ENCODE measurements at regions of chr5 and their contacts with region 1.

Region 1: DNA sequence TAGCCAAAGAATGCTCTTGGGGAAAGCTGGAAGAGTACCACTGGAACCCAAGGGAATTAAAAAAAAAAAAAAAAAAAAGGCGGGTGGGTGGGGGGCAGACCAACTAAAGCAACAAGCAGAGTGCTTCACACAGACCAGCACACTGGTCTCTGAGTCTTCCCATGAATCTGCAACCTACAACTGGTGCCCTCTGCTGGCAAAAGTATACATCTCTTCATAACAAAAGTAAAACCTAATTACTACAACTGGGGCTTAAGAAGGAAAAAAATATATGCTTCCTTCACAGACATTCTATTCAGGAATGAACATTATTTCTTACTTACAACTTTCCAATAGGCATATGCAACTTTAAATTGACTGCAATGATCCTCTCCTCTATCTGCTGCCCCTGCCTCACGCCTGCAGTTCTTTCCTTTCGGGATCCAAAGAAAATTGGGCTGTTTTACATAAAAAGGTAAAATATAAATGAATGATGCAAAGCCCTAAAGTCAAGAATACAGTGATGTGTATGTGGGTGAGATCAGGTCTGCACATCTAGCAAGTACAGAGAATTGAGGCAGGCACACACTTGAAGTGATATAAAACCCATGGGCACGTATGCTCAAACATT is 7.2 kb upstream of the KLHL3 start:
- DNase-seq: no peak
- H3K4me3 ChIP-seq: no peak overlapping the region
- H3K27ac ChIP-seq: no peak overlapping the region
- H3K4me1 ChIP-seq: peaks cover 39% of the 10 kb centered on the region
- H3K27me3 ChIP-seq: no peaks in the 10 kb centered on the region
- CTCF ChIP-seq: peak; percentile 77

Region 2: GRCh38 chr5:137629646-137630045 is 113.5 kb before region 1 on chr5:
- intact Hi-C with region 1: loop called (anchors 10 kb)
- DNase-seq: no peak
- H3K4me3 ChIP-seq: no peak overlapping the region
- H3K27ac ChIP-seq: peak overlapping the region; percentile 70
- H3K4me1 ChIP-seq: peaks cover 44% of the 10 kb centered on the region
- H3K27me3 ChIP-seq: no peaks in the 10 kb centered on the region
- CTCF ChIP-seq: peak; percentile 95

Region 3: GRCh38 chr5:137660349-137660817 is 82.8 kb before region 1 on chr5:
- intact Hi-C with region 1: loop called (anchors 5 kb)
- DNase-seq: peak; percentile 39
- H3K4me3 ChIP-seq: no peak overlapping the region
- H3K27ac ChIP-seq: no peak overlapping the region
- H3K4me1 ChIP-seq: peaks cover 14% of the 10 kb centered on the region
- H3K27me3 ChIP-seq: no peaks in the 10 kb centered on the region
- CTCF ChIP-seq: peak; percentile 84

Measured in left ventricle myocardium inferior (tissue), 1 donor.